Stomach (tissue), 19 donors: ENCODE measurements at regions of chr22 and their contacts with region 1.

Region 1: GRCh38 chr22:37316875-37317371 is 34.6 kb downstream of the CYTH4 start:
- DNase-seq: peak; percentile 77 to 93
- H3K4me3 ChIP-seq: no peak overlapping the region
- H3K27ac ChIP-seq: no peak overlapping the region
- H3K4me1 ChIP-seq: peaks cover 0 to 14% (median 4%) of the 10 kb centered on the region in 4 donors
- H3K27me3 ChIP-seq: peaks cover 0 to 72% (median 0%) of the 10 kb centered on the region in 3 donors
- CTCF ChIP-seq: peak in 5 of 7 experiments; percentile 68 to 95 (median 86)
- EP300 ChIP-seq: no peak
- POLR2A ChIP-seq: no peak

Region 2: DNA sequence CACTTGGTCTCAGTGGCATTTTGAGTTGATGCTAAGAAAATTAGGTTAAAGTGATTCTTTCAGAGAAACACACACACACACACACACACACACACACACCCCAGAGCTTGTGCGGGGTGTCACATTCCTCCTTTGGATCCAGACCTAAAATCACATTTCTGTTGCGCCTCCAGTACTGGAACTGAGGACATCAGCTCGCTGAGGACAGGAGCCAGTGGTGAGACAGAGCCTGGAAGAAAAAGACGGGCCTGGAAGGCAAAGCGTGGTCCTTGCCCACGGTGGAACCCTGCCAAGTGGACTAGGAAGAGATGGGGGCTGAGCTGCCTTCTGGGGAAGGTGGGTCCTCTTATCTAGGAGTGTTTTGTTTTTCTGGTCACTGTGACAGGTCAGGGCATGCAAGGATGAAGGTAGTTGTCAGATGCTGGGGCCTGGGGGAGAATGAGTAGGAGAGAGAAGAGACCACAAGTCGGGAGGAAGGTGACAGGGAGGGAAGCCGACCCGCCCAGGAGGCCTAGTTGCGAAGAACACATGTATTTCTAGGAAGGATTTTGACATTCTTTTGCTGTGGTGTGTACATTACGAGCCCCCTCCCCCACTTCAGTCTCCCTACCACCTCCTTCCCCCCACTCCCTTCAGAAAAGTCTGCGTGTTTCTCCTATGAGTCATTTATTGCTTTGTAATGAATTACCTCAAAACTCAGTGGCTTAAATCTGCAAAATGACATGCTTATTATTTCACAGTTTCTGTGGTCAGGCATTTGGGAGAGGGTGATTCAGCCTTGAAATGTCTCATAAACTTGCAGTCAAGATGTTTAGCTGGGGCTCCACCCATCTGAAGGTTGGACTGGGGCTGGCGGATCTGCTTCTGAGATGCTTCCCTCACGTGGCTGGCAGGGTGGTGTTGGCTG is 115.1 kb after region 1 on chr22:
- intact Hi-C with region 1: loop called (anchors 10 kb)
- DNase-seq: no peak
- H3K4me3 ChIP-seq: no peak overlapping the region
- H3K27ac ChIP-seq: no peak overlapping the region
- H3K4me1 ChIP-seq: peaks cover 9 to 14% (median 11%) of the 10 kb centered on the region in 4 donors
- H3K27me3 ChIP-seq: peaks cover 19 to 96% (median 58%) of the 10 kb centered on the region in 3 donors
- CTCF ChIP-seq: no peak
- EP300 ChIP-seq: no peak
- POLR2A ChIP-seq: no peak